HEK293 (cell line): ENCODE measurements at regions of chrX and their contacts with region 1.

Region 1: DNA sequence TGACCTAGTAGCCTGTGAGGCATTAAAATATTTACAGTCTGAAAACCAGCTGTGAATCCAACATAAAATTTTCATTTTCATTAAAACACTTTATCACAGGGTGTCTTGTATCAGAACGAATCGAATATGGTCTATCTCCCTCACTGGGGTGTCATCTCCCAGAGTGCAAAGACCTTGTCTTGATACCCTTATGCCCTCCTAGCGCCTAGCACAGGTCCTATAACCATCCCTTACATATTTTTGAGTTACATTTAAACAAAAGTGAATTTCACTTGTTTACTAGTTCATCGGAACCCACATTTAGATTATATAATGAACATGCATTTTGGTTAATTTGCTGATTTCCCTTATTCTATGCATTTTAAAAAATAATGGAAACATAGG is 14.0 kb downstream of the DIPK2B start:
- H3K4me3 ChIP-seq: no peak overlapping the region
- H3K27ac ChIP-seq: no peak overlapping the region
- H3K4me1 ChIP-seq: no peaks in the 10 kb centered on the region
- CTCF ChIP-seq: no peak

Region 2: GRCh38 chrX:43707812-43708548 is 1478.7 kb before region 1 on chrX:
- CTCF ChIA-PET with region 1: no interaction called
- POLR2A ChIA-PET with region 1: no interaction called
- H3K4me3 ChIP-seq: no peak overlapping the region
- H3K27ac ChIP-seq: no peak overlapping the region; the same call in 1 of the 2 replicates
- H3K4me1 ChIP-seq: peaks cover 6% of the 10 kb centered on the region; the same call in 1 of the 2 replicates
- CTCF ChIP-seq: no peak

Region 3: GRCh38 chrX:45128896-45129454 is 57.7 kb before region 1 on chrX:
- CTCF ChIA-PET with region 1: interaction called, 10 read pairs
- POLR2A ChIA-PET with region 1: no interaction called
- H3K4me3 ChIP-seq: no peak overlapping the region
- H3K27ac ChIP-seq: no peak overlapping the region
- H3K4me1 ChIP-seq: no peaks in the 10 kb centered on the region
- CTCF ChIP-seq: no peak

Region 4: DNA sequence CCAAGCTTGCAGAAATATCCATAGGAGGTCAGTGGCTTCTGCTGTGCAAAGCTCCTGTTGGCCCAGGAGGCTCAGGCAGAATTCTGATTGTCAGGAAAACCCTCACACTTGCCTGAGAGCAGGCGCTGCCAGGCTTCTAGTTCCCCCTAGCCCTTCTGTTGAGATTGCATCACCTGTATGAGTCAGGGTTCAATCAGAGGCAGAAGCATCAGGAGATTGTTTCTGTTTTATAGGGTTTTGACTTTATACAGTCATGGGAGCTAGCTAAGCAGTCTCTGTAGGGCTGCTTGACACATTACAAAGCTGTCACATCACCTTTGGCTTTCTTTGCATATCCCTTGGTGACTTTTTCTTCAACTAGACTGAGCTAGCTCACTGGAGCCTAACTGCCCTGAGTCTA is 13.7 kb before region 1 on chrX:
- CTCF ChIA-PET with region 1: interaction called, 15 read pairs
- POLR2A ChIA-PET with region 1: no interaction called
- H3K4me3 ChIP-seq: no peak overlapping the region
- H3K27ac ChIP-seq: no peak overlapping the region
- H3K4me1 ChIP-seq: no peaks in the 10 kb centered on the region
- CTCF ChIP-seq: no peak